ENCODE measurements at regions of chr20 and their contacts with region 1.

Region 1: GRCh38 chr20:54678253-54678652 is 202.9 kb downstream of the DOK5 start:
- DNase-seq: no peak
- ATAC-seq: no peak

Region 2: GRCh38 chr20:54606380-54606997 is 71.8 kb before region 1 on chr20:
- intact Hi-C with region 1: no loop called
- DNase-seq: no peak
- ATAC-seq: no peak

Region 3: GRCh38 chr20:54793291-54794136 is 115.3 kb after region 1 on chr20:
- intact Hi-C with region 1: no loop called
- DNase-seq: no peak
- ATAC-seq: peak in 1 of 2 donors; percentile 63

Region 4: GRCh38 chr20:56187534-56188198 is 1509.4 kb after region 1 on chr20:
- intact Hi-C with region 1: loop called in 1 of 2 experiments (anchors 10 kb)
- DNase-seq: no peak
- ATAC-seq: no peak